Activated naive CD8-positive, alpha-beta T cell treated with anti-CD3 and anti-CD28 coated beads, Interleukin-2, amount 10 ng/mL, durations not matched to agents 7 days and 5 days (primary cell): ENCODE measurements at regions of chr14 and their contacts with region 1.

Region 1: DNA sequence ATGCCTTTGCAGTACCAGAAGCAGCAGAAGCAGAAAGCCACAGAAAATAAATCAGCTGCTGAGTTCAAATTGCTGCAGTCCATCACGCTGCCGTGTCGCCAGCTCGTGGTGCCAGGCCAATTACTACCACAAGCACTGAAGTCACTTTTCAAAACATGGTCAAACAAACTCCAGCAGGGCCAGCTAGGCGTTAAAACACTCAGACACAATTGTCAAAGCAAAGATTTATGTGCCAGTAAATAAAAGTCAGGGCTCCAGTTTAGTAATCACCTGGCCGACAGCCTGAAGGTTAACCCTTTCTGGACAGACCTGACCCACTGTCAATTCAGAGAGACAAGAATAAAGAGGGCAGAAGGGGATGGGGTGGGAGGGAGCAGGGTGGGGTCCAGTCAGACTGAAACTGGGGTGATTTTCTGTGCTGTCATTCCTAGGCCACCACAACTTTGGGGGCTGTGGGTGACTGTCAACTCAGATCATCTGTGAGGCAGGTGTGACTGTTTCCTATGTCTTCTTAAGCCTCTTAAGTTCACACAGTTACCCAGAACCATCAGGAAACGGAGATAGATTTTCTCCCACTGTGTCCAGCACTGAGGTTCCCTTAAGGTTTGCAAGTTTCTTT is 109.8 kb upstream of the FUT8 start:
- DNase-seq: peak; percentile 60
- ATAC-seq: peak; percentile 85
- H3K4me3 Mint-ChIP-seq: peak overlapping the region; percentile 76
- H3K27ac Mint-ChIP-seq: peak overlapping the region; percentile 94
- H3K4me1 Mint-ChIP-seq: peaks cover 69% of the 10 kb centered on the region
- H3K27me3 Mint-ChIP-seq: no peaks in the 10 kb centered on the region

Region 2: GRCh38 chr14:65277027-65277426 is 25.7 kb before region 1 on chr14:
- POLR2A ChIA-PET with region 1: no interaction called
- DNase-seq: no peak
- ATAC-seq: no peak
- H3K4me3 Mint-ChIP-seq: no peak overlapping the region
- H3K27ac Mint-ChIP-seq: no peak overlapping the region
- H3K4me1 Mint-ChIP-seq: peaks cover 6% of the 10 kb centered on the region
- H3K27me3 Mint-ChIP-seq: no peaks in the 10 kb centered on the region

Region 3: DNA sequence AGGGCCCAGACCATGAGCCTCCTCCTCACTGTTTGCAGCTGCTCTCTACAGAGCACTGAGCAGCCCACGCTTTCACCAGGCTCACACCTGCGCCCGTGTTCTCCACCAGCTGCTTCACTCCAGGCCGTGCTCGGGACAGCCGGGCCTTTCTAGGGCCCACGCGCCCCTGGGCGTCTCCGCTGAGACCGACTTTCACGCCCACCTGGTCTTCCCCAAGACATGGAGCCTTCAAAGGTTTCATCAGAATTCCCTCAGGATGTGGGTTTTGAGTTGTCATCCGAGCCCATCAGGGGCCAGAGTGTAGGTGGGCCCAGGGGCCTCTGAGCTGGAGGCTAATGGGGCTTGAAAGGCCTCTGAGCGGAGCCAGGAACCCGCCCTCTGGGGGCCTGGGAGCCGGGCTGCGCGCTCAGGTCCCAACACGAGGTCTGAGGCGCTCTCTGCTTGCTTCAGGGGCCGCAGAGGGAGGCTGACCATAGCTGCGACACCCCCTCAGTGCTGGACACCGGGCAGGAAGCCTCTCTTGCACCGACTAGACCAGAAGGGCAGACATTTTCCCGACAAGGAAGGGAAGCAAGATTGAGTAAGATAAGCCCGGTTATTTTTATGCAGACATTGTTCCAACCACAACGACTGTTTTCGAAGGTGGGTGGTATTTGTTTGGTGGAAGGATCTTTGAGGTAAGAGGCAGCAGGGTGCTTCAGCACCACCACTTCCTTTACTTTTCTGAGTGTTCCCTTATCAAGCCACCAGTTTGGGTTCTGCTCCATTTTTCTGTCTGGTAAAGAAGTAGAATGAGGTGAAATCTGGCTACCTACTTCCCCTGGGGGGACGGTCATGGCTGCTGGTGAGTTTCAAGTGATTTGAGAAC is 15.2 kb before region 1 on chr14:
- POLR2A ChIA-PET with region 1: interaction called, 74 read pairs
- DNase-seq: peak; percentile 80
- ATAC-seq: peak; percentile 76
- H3K4me3 Mint-ChIP-seq: peak overlapping the region; percentile 89
- H3K27ac Mint-ChIP-seq: peak overlapping the region; percentile 98
- H3K4me1 Mint-ChIP-seq: peaks cover 62% of the 10 kb centered on the region
- H3K27me3 Mint-ChIP-seq: no peaks in the 10 kb centered on the region

Region 4: GRCh38 chr14:65321370-65321875 is 18.7 kb after region 1 on chr14:
- POLR2A ChIA-PET with region 1: interaction called, 16 read pairs
- DNase-seq: no peak
- ATAC-seq: peak; percentile 90
- H3K4me3 Mint-ChIP-seq: peak overlapping the region; percentile 25
- H3K27ac Mint-ChIP-seq: peak overlapping the region; percentile 84
- H3K4me1 Mint-ChIP-seq: peaks cover 53% of the 10 kb centered on the region
- H3K27me3 Mint-ChIP-seq: no peaks in the 10 kb centered on the region

Region 5: GRCh38 chr14:65336191-65336591 is 33.5 kb after region 1 on chr14:
- POLR2A ChIA-PET with region 1: interaction called, 21 read pairs
- DNase-seq: peak; percentile 49
- ATAC-seq: peak; percentile 93
- H3K4me3 Mint-ChIP-seq: peak overlapping the region; percentile 88
- H3K27ac Mint-ChIP-seq: peak overlapping the region; percentile 90
- H3K4me1 Mint-ChIP-seq: peaks cover 59% of the 10 kb centered on the region
- H3K27me3 Mint-ChIP-seq: no peaks in the 10 kb centered on the region

Region 6: GRCh38 chr14:65412032-65412846 is 109.6 kb after region 1 on chr14 and contains the start of gene FUT8:
- POLR2A ChIA-PET with region 1: interaction called, 13 read pairs
- DNase-seq: peak; percentile 92
- ATAC-seq: peak; percentile 86
- H3K4me3 Mint-ChIP-seq: peak within 1 kb of the TSS; percentile 97
- H3K27ac Mint-ChIP-seq: peak within 1 kb of the TSS; percentile 94
- H3K4me1 Mint-ChIP-seq: peaks cover 39% of the 10 kb centered on the region
- H3K27me3 Mint-ChIP-seq: no peaks in the 10 kb centered on the region
- total RNA-seq, gene FUT8: 82.7 to 86.4 TPM